ENCODE measurements at regions of chr20 and their contacts with region 1.

Region 1: DNA sequence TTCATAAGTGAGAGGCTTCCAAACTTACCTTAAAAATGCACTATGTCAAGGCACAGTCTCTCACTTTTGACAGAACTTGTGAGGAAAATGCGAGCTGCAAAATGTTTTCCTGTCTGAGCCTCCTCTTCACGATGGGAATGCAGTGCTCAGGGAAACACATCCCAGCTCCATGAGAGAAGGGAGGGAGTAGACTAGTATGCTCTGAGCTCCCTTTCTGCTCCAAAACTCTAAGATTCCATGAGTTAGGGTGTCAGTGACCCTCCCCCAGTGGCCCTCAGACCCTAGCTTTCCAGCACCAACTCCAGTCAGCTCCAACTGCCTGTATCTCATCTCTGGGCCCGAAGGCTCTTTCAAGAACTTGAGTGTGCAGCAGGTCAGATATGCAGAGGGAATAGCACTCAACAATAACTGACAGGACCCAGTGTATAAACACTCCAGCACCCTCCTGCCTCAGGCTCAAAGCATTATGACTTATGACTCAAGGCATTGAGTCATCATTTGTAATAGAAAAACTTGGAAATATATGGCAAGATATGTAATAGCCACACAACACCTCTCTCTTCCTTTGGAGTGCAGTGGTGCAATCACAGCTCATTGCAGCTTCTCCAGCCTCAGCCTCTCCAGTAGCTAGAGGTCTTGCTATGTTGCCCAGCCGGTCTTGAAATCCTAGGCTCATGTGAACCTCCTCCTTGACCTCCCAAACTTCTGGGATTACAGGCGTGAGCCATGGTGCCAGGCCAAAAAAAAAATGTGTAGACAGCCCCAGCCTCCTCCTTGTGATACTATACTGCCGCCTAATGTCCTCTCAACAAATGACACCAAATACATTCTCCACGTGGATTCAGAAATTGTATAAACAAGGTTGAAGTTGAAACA is 16.7 kb upstream of the ENTPD6 start:
- DNase-seq: no peak
- ATAC-seq: peak; percentile 37
- H3K4me3 Mint-ChIP-seq: no peak overlapping the region
- H3K27ac Mint-ChIP-seq: no peak overlapping the region
- H3K4me1 Mint-ChIP-seq: no peaks in the 10 kb centered on the region
- H3K27me3 Mint-ChIP-seq: peaks cover 10% of the 10 kb centered on the region
- CTCF ChIP-seq: no peak

Region 2: GRCh38 chr20:24100385-24101011 is 1078.3 kb before region 1 on chr20:
- CTCF ChIA-PET with region 1: no interaction called
- POLR2A ChIA-PET with region 1: no interaction called
- intact Hi-C with region 1: loop called (anchors 10 kb)
- DNase-seq: no peak
- ATAC-seq: no peak
- H3K4me3 Mint-ChIP-seq: no peak overlapping the region
- H3K27ac Mint-ChIP-seq: no peak overlapping the region
- H3K4me1 Mint-ChIP-seq: no peaks in the 10 kb centered on the region
- H3K27me3 Mint-ChIP-seq: peaks cover 14% of the 10 kb centered on the region
- CTCF ChIP-seq: no peak

Region 3: DNA sequence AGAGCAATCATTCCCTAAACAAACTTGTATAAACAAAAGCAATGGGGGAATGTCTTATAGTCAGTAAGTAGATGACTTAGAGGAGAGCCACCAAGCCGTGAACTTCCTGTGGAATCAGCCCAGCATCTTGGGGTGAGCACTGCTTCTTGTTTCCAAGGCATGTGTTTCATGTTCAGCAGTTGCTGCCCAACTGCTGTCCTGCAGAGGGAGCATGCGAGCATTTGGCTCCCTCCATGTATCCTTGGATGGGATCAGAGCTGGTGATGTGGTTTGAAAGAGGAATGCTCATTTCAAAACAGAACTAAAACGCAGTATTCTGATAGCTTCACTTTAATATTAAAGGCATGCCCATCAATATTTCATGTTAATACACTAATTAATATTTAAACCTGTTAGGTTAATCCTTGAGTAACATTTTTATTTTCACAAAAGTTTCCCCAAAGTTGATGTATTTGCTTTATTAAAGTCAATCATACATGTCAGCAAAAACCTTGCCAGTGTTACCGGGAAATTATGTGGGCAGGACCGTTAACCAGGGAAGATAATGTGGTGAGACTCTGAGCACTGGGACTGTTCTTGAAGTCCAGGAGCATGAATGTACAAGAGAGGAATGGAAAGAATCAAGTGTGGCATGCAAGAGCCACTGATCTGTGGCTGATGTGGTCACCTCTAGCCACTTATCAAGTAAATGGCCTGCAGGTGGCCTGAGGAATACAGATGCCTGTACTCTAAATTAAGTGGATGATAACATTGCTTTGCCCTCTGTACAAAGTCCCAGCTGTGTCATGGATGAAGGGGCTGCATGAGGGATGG is 1018.0 kb before region 1 on chr20:
- CTCF ChIA-PET with region 1: no interaction called
- POLR2A ChIA-PET with region 1: no interaction called
- intact Hi-C with region 1: loop called (anchors 5 kb)
- DNase-seq: no peak
- ATAC-seq: no peak
- H3K4me3 Mint-ChIP-seq: no peak overlapping the region
- H3K27ac Mint-ChIP-seq: no peak overlapping the region
- H3K4me1 Mint-ChIP-seq: no peaks in the 10 kb centered on the region
- H3K27me3 Mint-ChIP-seq: no peaks in the 10 kb centered on the region
- CTCF ChIP-seq: no peak

Region 4: GRCh38 chr20:24176661-24177060 is 1002.1 kb before region 1 on chr20:
- CTCF ChIA-PET with region 1: no interaction called
- POLR2A ChIA-PET with region 1: no interaction called
- intact Hi-C with region 1: no loop called
- DNase-seq: no peak
- ATAC-seq: no peak
- H3K4me3 Mint-ChIP-seq: no peak overlapping the region
- H3K27ac Mint-ChIP-seq: no peak overlapping the region
- H3K4me1 Mint-ChIP-seq: no peaks in the 10 kb centered on the region
- H3K27me3 Mint-ChIP-seq: peaks cover 16% of the 10 kb centered on the region
- CTCF ChIP-seq: no peak

Region 5: GRCh38 chr20:25294459-25295385 is 115.9 kb after region 1 on chr20:
- CTCF ChIA-PET with region 1: no interaction called
- POLR2A ChIA-PET with region 1: no interaction called
- intact Hi-C with region 1: no loop called
- DNase-seq: peak; percentile 54
- ATAC-seq: peak; percentile 92
- H3K4me3 Mint-ChIP-seq: no peak overlapping the region
- H3K27ac Mint-ChIP-seq: no peak overlapping the region
- H3K4me1 Mint-ChIP-seq: peaks cover 5% of the 10 kb centered on the region
- H3K27me3 Mint-ChIP-seq: no peaks in the 10 kb centered on the region
- CTCF ChIP-seq: no peak

Region 6: GRCh38 chr20:25324412-25324811 is 145.6 kb after region 1 on chr20:
- CTCF ChIA-PET with region 1: no interaction called
- POLR2A ChIA-PET with region 1: no interaction called
- intact Hi-C with region 1: no loop called
- DNase-seq: no peak
- ATAC-seq: no peak
- H3K4me3 Mint-ChIP-seq: no peak overlapping the region
- H3K27ac Mint-ChIP-seq: no peak overlapping the region
- H3K4me1 Mint-ChIP-seq: peaks cover 21% of the 10 kb centered on the region
- H3K27me3 Mint-ChIP-seq: no peaks in the 10 kb centered on the region
- CTCF ChIP-seq: no peak

Measured in activated B cell treated with CpG ODN at 0.5 μM for 24 hours (primary cell).